ENCODE measurements at regions of chr3 and their contacts with region 1.

Region 1: DNA sequence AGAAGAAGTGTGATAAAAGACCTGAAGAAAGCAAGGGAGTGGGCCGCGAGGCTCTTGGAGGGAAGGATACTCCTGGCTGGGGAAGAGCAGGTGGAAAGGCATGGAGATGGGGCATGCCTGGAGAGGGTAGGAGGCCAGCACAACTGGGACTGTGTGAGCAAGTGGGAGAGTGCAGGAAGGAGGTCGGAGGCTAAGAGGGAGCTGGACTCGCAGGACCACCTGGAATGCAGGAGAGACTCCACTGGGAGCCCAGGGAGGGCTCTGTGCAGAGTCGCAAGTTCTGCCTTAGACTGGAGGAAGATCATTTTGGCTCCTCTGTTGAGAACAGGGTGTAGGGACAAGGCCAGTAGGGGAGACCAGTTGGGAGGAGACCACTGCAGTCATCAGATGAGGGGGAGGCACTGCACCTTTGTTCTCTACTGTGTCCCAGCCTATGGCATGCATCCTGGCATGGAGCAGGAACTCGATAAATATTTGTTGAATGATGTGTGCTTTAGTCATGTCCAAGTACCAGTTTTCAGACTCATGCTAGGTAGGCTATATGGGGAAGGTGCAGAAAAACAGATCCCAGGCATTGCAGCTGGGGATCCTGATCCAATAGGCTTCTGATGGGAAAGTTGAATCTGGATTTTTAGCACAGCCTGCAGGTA is 13.7 kb downstream of the FAM107A start:
- DNase-seq: no peak
- H3K4me3 ChIP-seq: no peak overlapping the region
- H3K27ac ChIP-seq: no peak overlapping the region
- H3K4me1 ChIP-seq: no peaks in the 10 kb centered on the region
- H3K27me3 ChIP-seq: no peaks in the 10 kb centered on the region
- CTCF ChIP-seq: no peak

Region 2: DNA sequence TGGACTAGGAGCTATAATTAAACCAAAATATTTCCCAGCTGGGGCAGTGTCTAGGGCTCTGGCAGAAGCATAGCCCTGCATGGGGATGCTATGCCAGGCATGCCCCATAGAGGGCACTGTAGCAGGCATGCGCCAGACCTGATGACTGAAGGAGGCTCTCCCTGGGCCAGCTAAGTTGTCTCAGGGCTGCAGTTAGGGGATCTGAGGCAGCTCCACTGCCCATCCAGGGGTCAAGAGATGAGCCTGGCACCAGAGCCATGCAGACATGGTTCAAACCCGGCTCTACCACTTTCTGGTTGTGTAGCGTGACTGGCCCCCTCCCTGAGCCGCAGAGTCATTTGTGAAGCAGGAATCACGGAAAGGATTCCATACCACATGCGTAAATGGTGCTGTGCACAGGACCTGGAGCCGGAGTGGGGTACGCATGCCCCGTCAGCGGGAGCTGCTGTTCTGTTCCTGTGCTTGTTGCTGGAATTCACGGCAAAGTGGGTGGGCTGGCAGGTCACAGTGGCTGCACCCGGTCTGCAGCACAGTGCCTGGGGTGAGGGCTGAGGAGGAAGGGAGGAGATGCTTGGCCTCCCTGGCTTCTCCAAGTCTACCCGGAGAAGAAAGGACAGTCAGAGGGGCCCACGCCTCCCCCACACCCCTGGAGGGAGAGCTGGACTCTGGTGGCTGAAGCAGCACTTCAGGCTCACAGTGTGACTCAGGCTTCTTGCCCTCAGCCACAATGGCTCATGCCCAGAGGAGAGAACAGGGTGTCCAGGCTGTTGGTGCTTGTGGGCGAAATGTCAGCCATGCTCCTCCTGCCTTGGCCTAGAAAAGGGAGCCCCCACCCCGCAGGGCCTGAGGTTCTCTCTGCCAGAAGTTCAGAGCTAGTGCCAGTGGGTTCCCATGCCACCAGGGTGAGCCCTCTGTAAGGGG is 395.8 kb before region 1 on chr3:
- CTCF ChIA-PET with region 1: no interaction called
- POLR2A ChIA-PET with region 1: no interaction called
- intact Hi-C with region 1: no loop called
- DNase-seq: peak; percentile 45
- H3K4me3 ChIP-seq: no peak overlapping the region
- H3K27ac ChIP-seq: no peak overlapping the region
- H3K4me1 ChIP-seq: no peaks in the 10 kb centered on the region
- H3K27me3 ChIP-seq: no peaks in the 10 kb centered on the region
- CTCF ChIP-seq: peak; percentile 78

Region 3: GRCh38 chr3:58497097-58497496 is 66.4 kb before region 1 on chr3:
- CTCF ChIA-PET with region 1: no interaction called
- POLR2A ChIA-PET with region 1: interaction called, 15 read pairs
- intact Hi-C with region 1: no loop called
- DNase-seq: peak; percentile 21
- H3K4me3 ChIP-seq: no peak overlapping the region
- H3K27ac ChIP-seq: no peak overlapping the region
- H3K4me1 ChIP-seq: peaks cover 26% of the 10 kb centered on the region
- H3K27me3 ChIP-seq: no peaks in the 10 kb centered on the region
- CTCF ChIP-seq: no peak

Region 4: DNA sequence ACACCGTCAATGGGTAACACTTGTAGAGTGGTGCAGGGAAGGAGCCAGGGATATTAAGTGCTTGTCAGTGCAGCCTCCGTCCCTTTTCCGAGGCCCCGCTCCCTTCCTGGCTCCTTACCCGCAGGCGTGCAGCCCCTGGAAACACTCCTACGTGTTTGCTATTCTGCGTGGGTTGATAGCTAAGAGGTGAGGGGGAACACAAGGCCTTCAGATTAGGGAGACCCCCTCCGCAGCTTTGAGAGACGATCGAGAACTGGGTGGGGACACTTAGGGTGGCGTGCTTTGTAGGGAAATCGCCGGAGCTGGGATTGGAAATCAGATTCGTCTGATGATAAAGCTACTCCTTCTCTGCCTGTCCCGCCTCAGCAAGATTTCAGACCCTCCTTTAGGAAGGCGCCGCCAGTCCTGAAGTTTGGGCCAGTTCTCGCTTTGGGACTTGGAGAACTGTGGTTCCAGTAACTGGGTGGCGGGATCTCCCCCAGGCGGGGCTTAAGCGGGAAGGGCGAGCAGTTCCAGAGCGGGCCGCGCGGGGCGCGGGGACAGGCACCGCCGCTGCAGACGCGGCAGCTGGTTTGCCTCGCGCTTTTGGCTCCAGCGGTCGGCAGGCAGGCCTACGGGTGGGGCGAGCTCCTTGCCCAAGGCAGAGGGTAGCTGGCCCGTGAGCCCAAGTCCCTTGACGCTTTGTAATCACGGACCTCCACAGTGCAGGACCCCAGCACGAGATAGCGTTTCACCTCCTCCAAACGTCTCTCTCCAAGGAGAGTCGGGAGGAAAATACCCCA is 21.7 kb after region 1 on chr3:
- CTCF ChIA-PET with region 1: no interaction called
- POLR2A ChIA-PET with region 1: interaction called, 12 read pairs
- intact Hi-C with region 1: no loop called
- DNase-seq: peak; percentile 68
- H3K4me3 ChIP-seq: peak overlapping the region; percentile 44
- H3K27ac ChIP-seq: no peak overlapping the region
- H3K4me1 ChIP-seq: peaks cover 17% of the 10 kb centered on the region
- H3K27me3 ChIP-seq: peaks cover 7% of the 10 kb centered on the region
- CTCF ChIP-seq: peak; percentile 57

Region 5: DNA sequence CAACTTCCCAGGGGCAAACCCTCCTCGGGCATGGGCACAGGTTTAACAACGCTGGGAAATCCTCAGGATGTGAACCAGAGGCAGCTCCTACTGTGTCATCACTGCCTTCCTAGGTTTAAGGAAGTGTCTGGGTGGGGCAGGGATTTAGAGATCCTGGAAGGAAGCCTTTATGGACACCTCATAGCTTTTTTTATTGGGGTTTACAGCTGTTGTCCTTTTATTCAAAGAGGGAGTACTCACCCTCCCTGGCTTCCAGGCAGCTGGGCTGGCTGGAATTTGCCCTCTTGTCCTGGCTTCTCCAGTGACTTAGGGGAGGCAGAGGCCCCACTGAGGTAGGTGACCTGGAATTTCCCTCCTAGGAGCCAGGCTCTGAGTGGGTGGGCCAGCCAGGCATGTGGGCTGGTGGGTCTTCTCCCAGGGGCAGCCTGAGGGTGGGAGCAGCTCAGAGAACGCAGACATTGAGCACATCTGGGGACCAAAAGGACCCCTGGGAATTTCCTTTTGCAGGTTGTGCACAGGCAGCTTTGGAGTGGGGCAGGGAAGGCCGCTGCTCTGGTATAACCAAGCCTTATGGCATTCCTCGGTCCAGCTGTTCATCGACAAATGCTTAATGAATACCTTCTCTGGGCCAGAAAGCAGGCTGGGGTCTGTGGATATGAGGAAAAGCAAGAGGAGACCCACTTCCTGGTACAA is 116.6 kb after region 1 on chr3:
- CTCF ChIA-PET with region 1: no interaction called
- POLR2A ChIA-PET with region 1: no interaction called
- intact Hi-C with region 1: no loop called
- DNase-seq: no peak
- H3K4me3 ChIP-seq: no peak overlapping the region
- H3K27ac ChIP-seq: no peak overlapping the region
- H3K4me1 ChIP-seq: no peaks in the 10 kb centered on the region
- H3K27me3 ChIP-seq: peaks cover 16% of the 10 kb centered on the region
- CTCF ChIP-seq: no peak

Region 6: GRCh38 chr3:59273976-59274375 is 710.5 kb after region 1 on chr3:
- CTCF ChIA-PET with region 1: no interaction called
- POLR2A ChIA-PET with region 1: no interaction called
- intact Hi-C with region 1: no loop called
- DNase-seq: no peak
- H3K4me3 ChIP-seq: no peak overlapping the region
- H3K27ac ChIP-seq: no peak overlapping the region
- H3K4me1 ChIP-seq: no peaks in the 10 kb centered on the region
- H3K27me3 ChIP-seq: no peaks in the 10 kb centered on the region
- CTCF ChIP-seq: no peak

Measured in A673 (cell line).